Breast epithelium (tissue), 4 donors: ENCODE measurements at regions of chr10 and their contacts with region 1.

Region 1: DNA sequence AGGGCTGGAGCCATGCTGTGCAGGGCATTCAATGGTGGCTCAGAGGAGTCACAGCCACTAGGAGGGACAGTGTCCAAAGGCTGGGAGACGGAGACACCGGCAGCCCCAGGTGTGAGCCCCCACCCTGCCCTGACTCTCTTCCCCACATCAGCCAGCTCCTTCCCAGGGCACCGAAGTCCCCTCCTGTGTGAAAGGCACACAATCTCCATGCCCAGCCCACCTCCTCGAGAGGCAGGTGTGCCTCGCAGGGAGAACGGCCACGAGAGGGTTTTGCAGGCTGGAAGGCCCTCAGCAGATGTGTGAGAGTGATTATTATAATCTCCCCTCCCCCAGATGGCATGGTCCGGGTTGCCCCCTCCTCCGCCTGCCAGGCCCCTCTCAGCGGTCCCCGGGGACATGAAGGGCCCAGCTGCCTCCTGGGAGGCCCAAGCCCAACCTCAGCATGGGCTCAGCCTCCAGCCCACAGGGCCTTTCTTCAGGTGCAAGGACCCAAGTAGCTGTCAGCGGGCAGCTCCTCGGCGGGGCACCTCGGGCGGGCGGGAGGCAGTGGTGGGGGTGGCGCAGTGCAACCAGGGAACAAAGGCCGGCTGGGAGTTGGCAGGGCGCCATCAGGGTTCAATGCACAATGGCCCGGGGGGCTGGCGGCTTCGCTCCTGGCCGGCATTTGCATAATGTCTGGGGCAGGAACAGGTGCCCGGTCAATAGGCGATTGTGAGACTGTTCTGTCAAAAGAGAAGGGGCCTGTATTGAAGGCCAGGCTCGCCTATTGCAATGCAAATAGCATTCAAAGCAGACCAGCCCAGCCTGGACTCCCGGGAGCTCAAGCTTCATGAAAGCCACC is 155.3 kb upstream of the ZMIZ1 start:
- DNase-seq: peak; percentile 39 to 69
- H3K4me3 ChIP-seq: no peak overlapping the region
- H3K27ac ChIP-seq: no peak overlapping the region
- H3K4me1 ChIP-seq: peaks cover 0 to 5% of the 10 kb centered on the region in 2 donors
- H3K27me3 ChIP-seq: no peaks in the 10 kb centered on the region
- CTCF ChIP-seq: no peak
- POLR2A ChIP-seq: no peak

Region 2: GRCh38 chr10:78851647-78852046 is 61.8 kb before region 1 on chr10:
- intact Hi-C with region 1: loop called (anchors 2 kb)
- DNase-seq: no peak
- H3K4me3 ChIP-seq: no peak overlapping the region
- H3K27ac ChIP-seq: no peak overlapping the region
- H3K4me1 ChIP-seq: no peaks in the 10 kb centered on the region
- H3K27me3 ChIP-seq: no peaks in the 10 kb centered on the region
- CTCF ChIP-seq: no peak
- POLR2A ChIP-seq: no peak

Region 3: GRCh38 chr10:78960316-78960800 is 46.9 kb after region 1 on chr10:
- intact Hi-C with region 1: no loop called
- DNase-seq: peak in 1 of 2 donors; percentile 62
- H3K4me3 ChIP-seq: no peak overlapping the region
- H3K27ac ChIP-seq: peak overlapping the region in 1 of 2 donors; percentile 1
- H3K4me1 ChIP-seq: peaks cover 0 to 14% of the 10 kb centered on the region in 2 donors
- H3K27me3 ChIP-seq: no peaks in the 10 kb centered on the region
- CTCF ChIP-seq: no peak
- POLR2A ChIP-seq: no peak